SK-N-SH (cell line): ENCODE measurements at regions of chr22 and their contacts with region 1.

Region 1: GRCh38 chr22:39532215-39533071 is at the start of gene RPS19BP1:
- DNase-seq: peak; percentile 86
- H3K4me3 ChIP-seq: peak within 1 kb of the TSS; percentile 72
- H3K27ac ChIP-seq: peak within 1 kb of the TSS; percentile 66 to 76; a peak in 3 of 4 replicates
- H3K4me1 ChIP-seq: peaks cover 4 to 24% of the 10 kb centered on the region in 2 experiments; a peak in 2 of 4 replicates
- H3K27me3 ChIP-seq: no peaks in the 10 kb centered on the region
- CTCF ChIP-seq: no peak
- EP300 ChIP-seq: no peak
- RAD21 ChIP-seq: no peak
- polyA plus RNA-seq, gene RPS19BP1: 77.3 and 97.2 TPM in 2 replicates

Region 2: DNA sequence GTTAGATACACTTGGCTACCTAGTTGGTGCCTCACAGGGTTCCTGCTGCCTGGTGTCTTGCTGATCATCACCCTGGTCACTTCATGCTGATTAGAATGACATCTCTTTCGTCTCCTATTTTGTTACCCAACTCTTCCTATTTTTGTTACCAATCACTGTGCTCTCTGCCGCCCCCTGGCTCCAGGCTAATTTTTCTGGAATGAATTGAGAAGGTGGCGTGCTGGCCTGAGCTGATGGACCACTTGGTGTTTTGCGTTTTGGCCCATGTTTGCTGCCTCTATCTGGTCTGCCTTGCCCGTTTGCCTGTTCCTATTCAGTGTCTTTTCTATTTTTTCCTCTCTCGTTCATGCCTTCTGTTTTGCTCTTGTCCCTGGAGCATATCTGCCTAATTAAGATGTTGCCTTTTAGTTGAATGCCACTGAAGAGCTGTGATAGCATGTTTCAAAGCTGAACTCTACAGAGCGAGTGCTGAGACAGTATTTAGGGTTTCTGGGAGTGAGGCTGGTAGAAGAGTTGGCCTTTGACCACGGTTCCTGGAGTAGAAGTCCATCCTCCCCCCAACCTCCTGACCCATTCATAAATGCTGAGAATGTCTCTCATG is 18.0 kb before region 1 on chr22:
- CTCF ChIA-PET with region 1: interaction called, 17 read pairs
- POLR2A ChIA-PET with region 1: interaction called, 5 read pairs
- DNase-seq: peak; percentile 47
- H3K4me3 ChIP-seq: no peak overlapping the region
- H3K27ac ChIP-seq: no peak overlapping the region
- H3K4me1 ChIP-seq: peaks cover 7 to 8% of the 10 kb centered on the region in 2 experiments; a peak in 2 of 4 replicates
- H3K27me3 ChIP-seq: no peaks in the 10 kb centered on the region
- CTCF ChIP-seq: peak; percentile 61
- EP300 ChIP-seq: no peak
- RAD21 ChIP-seq: peak; percentile 50

Region 3: DNA sequence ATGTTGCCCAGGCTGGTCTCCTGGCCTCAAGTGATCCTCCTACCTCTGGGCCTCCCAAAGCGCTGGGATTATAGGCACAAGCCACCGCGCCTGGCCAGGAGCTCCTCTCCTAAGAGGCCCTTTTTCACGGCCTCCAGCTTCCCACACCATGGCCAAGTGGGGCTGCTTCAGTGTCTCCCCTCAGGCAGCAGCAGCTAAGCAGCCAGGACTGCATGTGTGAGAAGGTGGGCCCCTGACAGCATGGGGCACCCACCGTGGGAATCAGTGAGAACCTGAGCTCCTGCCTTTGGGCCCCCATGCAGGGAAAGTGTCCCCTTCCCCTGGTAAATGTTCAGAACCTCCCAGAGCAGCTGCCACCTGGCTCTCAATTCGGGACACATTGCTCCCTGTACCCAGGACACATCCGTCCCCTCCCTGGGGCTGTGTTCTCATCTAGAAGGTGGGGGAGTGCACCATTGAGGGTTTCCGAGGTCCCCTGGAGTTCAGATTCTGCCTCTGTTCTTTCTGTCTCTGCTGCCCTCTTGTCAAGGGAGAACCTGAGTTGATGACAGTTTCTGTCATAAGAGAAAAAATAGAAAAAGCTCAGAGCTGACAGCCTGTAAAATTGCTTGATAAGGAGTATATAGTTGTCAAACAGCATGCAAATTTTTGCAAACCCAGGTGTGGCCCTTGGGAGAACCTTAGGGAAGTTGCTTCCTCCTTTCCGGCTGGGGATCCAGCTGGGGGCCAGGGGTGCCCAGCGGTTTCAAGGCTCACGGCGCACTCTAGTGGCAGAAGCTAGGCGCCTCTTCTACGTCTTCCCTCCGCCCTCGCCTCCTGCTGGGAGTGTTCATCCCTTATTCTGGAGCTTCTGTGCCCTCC is 492.0 kb after region 1 on chr22:
- CTCF ChIA-PET with region 1: interaction called, 31 read pairs
- POLR2A ChIA-PET with region 1: no interaction called
- DNase-seq: peak; percentile 85
- H3K4me3 ChIP-seq: peak overlapping the region in 1 of 2 experiments; percentile 37; a peak in 1 of 4 replicates
- H3K27ac ChIP-seq: no peak overlapping the region
- H3K4me1 ChIP-seq: peaks cover 0 to 11% of the 10 kb centered on the region in 2 experiments; a peak in 1 of 4 replicates
- H3K27me3 ChIP-seq: no peaks in the 10 kb centered on the region
- CTCF ChIP-seq: peak; percentile 72
- EP300 ChIP-seq: no peak
- RAD21 ChIP-seq: peak; percentile 84

Region 4: GRCh38 chr22:40044102-40044869 is 511.8 kb after region 1 on chr22:
- CTCF ChIA-PET with region 1: interaction called, 14 read pairs
- POLR2A ChIA-PET with region 1: interaction called, 3 read pairs
- DNase-seq: peak; percentile 89
- H3K4me3 ChIP-seq: peak overlapping the region; percentile 64 to 72
- H3K27ac ChIP-seq: peak overlapping the region; percentile 83 to 87
- H3K4me1 ChIP-seq: peaks cover 8 to 12% of the 10 kb centered on the region in 2 experiments; a peak in 2 of 4 replicates
- H3K27me3 ChIP-seq: no peaks in the 10 kb centered on the region
- CTCF ChIP-seq: no peak
- EP300 ChIP-seq: no peak
- RAD21 ChIP-seq: no peak